ENCODE measurements at regions of chr11 and their contacts with region 1.

Region 1: GRCh38 chr11:134592391-134592990 is 180.4 kb upstream of the B3GAT1 start:
- DNase-seq: peak; percentile 53 to 70
- H3K4me3 ChIP-seq: no peak overlapping the region
- H3K4me3 Mint-ChIP-seq: no peak overlapping the region
- H3K27ac Mint-ChIP-seq: no peak overlapping the region
- H3K4me1 ChIP-seq: no peaks in the 10 kb centered on the region
- H3K4me1 Mint-ChIP-seq: no peaks in the 10 kb centered on the region
- H3K27me3 ChIP-seq: no peaks in the 10 kb centered on the region
- H3K27me3 Mint-ChIP-seq: peaks cover 9% of the 10 kb centered on the region
- CTCF ChIP-seq: peak; percentile 50 to 80

Region 2: DNA sequence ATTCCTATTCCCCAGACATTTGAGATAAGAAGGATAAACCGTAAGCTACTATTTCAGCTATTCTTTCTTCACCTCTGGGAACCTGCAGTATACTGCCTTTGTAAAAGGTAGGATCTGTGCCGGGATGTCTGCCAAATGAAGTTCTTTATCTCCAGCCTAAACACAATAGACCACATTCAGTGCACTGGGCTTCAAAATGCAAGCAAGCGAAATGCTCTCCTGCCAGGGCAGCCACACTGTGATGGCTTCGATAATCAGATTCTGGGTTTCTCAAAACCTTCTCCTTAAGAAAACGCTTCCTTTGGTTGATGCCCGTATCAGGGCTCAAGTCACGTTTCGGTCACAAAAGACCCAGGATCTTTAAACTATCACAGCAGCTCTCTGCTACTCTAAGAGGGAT is 119.1 kb after region 1 on chr11:
- CTCF ChIA-PET with region 1: no interaction called
- POLR2A ChIA-PET with region 1: no interaction called
- intact Hi-C with region 1: no loop called
- DNase-seq: no peak
- H3K4me3 ChIP-seq: no peak overlapping the region
- H3K4me3 Mint-ChIP-seq: no peak overlapping the region
- H3K27ac Mint-ChIP-seq: no peak overlapping the region
- H3K4me1 ChIP-seq: no peaks in the 10 kb centered on the region
- H3K4me1 Mint-ChIP-seq: no peaks in the 10 kb centered on the region
- H3K27me3 ChIP-seq: no peaks in the 10 kb centered on the region
- H3K27me3 Mint-ChIP-seq: peaks cover 3% of the 10 kb centered on the region
- CTCF ChIP-seq: no peak

Region 3: DNA sequence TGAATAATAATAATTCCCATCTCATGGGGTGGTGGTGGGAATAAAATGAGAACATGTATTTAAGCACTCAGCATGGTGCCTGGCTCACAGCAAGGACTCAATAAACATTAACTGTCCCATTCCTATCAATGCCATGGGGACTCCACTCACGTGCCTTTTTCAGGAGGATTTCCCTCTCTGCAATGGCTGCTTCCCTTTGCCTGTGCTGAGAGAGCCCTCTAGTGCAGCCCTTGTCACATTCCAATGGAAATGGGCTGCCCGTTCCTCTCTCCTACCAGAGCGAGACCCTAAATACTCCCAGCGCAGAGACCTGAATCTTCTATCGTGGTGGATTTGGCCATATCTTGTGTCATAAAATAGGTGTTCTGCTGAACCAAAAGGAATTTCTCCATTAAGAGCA is 441.0 kb after region 1 on chr11:
- CTCF ChIA-PET with region 1: no interaction called
- POLR2A ChIA-PET with region 1: no interaction called
- intact Hi-C with region 1: loop called (anchors 1 kb)
- DNase-seq: peak; percentile 67 to 75
- H3K4me3 ChIP-seq: no peak overlapping the region
- H3K4me3 Mint-ChIP-seq: no peak overlapping the region
- H3K27ac Mint-ChIP-seq: no peak overlapping the region
- H3K4me1 ChIP-seq: no peaks in the 10 kb centered on the region
- H3K4me1 Mint-ChIP-seq: no peaks in the 10 kb centered on the region
- H3K27me3 ChIP-seq: no peaks in the 10 kb centered on the region
- H3K27me3 Mint-ChIP-seq: peaks cover 11% of the 10 kb centered on the region
- CTCF ChIP-seq: peak; percentile 30 to 75